Activated CD4-positive, alpha-beta T cell treated with anti-CD3 and anti-CD28 coated beads for 36 hours (primary cell): ENCODE measurements at regions of chr7 and their contacts with region 1.

Region 1: DNA sequence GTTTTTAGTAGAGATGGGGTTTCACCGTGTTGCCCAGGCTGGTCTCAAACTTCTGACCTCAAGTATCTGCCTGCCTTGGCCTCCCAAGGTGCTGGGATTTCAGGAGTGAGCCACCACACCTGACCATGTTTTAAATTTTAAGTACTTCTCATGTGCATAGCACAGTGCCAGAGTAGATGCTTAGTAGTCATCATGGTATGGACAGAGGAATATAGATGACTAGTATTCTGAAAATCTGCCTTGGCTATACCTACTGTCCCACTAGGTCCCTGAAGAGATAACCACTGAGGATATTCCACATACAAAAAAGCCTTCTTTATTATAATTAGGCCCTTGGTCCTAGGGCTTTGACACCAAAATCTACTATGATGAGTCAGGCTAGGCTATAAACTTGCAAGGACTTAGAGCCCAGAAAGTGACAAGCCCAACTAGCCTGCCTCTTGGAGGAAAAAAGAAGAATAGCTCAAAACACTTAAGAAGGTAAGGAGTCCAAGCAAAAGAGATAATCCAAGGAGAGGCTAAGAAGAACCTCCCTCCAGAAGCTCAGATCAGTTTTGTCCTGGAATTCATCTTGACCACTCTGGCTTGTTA is 34.0 kb downstream of the LUC7L2 start:
- DNase-seq: no peak
- ATAC-seq: peak; percentile 65
- H3K4me3 Mint-ChIP-seq: no peak overlapping the region
- H3K27ac Mint-ChIP-seq: no peak overlapping the region
- H3K4me1 Mint-ChIP-seq: peaks cover 46% of the 10 kb centered on the region
- H3K27me3 Mint-ChIP-seq: no peaks in the 10 kb centered on the region

Region 2: GRCh38 chr7:139382439-139382838 is 11.3 kb before region 1 on chr7:
- CTCF ChIA-PET with region 1: interaction called, 20 read pairs
- POLR2A ChIA-PET with region 1: interaction called, 6 read pairs
- intact Hi-C with region 1: no loop called
- DNase-seq: no peak
- ATAC-seq: no peak
- H3K4me3 Mint-ChIP-seq: no peak overlapping the region
- H3K27ac Mint-ChIP-seq: no peak overlapping the region
- H3K4me1 Mint-ChIP-seq: peaks cover 3% of the 10 kb centered on the region
- H3K27me3 Mint-ChIP-seq: no peaks in the 10 kb centered on the region

Region 3: DNA sequence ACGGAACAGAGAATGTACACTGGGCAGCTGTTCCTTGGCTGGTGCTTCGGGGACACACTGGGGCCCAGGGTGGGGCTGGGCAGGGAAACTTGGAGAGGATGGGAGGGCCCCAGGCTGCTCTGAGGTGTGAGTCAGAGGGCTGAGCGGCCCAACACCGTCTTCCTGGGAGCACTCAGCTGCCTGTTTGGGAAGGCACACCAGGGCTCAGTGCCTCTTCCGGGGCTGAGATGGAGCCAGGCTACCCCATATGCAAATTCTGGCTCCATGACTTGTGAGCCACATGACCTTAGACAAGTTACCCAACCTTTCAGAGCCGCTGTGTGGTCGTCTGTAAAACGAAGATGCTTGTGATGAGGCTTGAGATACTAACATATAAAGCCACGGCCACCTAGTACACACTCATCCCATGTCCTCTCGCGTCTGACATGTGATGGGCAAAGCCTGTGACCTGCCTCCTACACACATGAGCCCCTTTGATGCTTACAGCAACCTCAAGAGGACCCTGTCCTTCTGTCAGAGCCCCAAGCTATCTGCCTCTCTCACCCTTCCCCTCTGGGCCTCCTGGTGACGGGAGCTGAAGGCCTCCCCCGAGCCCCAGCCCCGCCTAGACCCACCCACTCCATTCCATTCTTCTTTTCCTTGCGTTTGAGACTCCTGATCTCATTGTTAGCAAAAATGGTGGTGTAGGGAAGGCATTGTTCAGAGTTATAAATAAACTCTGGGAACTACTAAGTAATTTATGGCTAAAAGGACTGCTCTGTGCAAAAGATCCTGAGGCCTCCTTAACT is 63.6 kb after region 1 on chr7:
- CTCF ChIA-PET with region 1: no interaction called
- POLR2A ChIA-PET with region 1: no interaction called
- intact Hi-C with region 1: no loop called
- DNase-seq: no peak
- ATAC-seq: no peak
- H3K4me3 Mint-ChIP-seq: no peak overlapping the region
- H3K27ac Mint-ChIP-seq: no peak overlapping the region
- H3K4me1 Mint-ChIP-seq: no peaks in the 10 kb centered on the region
- H3K27me3 Mint-ChIP-seq: no peaks in the 10 kb centered on the region